Stomach (tissue), 19 donors: ENCODE measurements at regions of chr20 and their contacts with region 1.

Region 1: DNA sequence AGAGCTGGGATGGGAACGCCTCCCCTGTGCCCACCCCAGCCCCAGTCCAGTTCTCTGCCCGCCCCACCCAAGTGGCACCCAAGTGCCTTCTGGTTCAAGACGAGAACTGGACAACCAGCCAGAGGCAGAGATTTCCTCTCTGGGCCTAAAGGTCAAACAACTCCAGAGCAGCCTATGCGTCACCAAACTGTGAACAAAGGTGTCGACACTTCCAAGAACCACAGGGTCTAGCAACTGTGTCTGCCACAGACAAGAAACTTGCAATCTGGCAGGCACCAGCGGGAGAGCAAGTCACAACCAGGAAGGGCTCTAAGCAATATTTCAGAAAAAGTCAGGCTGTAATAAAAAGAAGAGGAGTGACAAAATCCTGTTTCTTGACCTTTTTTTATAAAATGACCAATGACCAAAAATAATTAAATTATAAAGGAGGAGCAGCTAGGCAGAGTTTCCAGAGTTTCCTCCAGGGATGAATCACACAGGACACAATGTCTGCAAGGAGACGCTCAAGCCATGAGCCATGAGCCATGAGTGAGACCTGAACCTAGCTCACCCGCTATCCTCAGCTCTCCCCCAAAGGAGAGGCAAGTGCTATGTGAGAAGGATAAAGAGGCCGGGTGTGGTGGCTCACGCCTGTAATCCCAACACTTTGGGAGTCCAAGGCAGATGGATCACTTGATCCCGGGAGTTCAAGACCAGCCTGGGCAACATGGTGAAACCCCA is 11.1 kb downstream of the EDEM2 start:
- DNase-seq: no peak
- H3K4me3 ChIP-seq: no peak overlapping the region
- H3K27ac ChIP-seq: peak overlapping the region in 4 of 5 donors; percentile 20 to 38 (median 36)
- H3K4me1 ChIP-seq: peaks cover 0 to 15% (median 0%) of the 10 kb centered on the region in 4 donors
- H3K27me3 ChIP-seq: no peaks in the 10 kb centered on the region
- CTCF ChIP-seq: no peak
- EP300 ChIP-seq: no peak
- POLR2A ChIP-seq: no peak

Region 2: GRCh38 chr20:35207950-35208611 is 72.1 kb after region 1 on chr20:
- intact Hi-C with region 1: loop called (anchors 5 kb)
- DNase-seq: peak; percentile 82 to 94
- H3K4me3 ChIP-seq: no peak overlapping the region
- H3K27ac ChIP-seq: peak overlapping the region; percentile 57 to 69 (median 63)
- H3K4me1 ChIP-seq: peaks cover 0 to 15% (median 12%) of the 10 kb centered on the region in 4 donors
- H3K27me3 ChIP-seq: no peaks in the 10 kb centered on the region
- CTCF ChIP-seq: peak in 5 of 7 experiments; percentile 63 to 85 (median 77)
- EP300 ChIP-seq: no peak
- POLR2A ChIP-seq: no peak